Left colon (tissue), 2 donors: ENCODE measurements at regions of chr15 and their contacts with region 1.

Region 1: DNA sequence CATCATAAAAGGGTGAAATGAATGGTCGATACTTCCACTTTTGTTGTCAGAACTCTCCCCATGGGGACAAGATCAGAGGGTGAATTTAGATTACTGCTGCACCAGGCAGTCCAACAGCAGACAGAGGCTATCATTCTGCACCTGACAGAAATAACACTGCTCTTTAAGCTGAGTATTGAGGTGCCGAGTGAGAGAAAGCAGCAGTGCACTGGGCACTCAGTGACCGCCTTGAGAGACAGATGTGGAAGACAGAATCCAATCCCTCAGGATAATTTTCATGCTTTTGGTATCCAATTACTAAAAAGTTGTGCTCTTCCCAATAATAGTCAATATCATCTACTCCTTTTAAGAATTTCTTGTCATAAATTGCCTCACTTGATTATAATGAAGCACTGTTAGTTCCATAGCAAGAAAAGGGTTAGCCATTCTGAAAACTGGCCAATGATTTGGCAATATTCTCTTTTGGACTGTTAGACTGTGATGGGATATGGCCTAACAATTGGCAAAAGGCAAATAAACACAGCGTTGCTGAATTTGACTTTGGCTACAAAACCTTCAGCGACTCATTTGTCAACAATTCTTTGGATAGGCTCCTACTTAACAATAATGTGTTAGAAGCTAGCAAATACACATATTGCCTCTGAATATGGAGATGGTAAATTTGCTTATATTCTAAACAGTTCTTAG is 5.5 kb downstream of the FGF7 start:
- DNase-seq: no peak
- ATAC-seq: no peak

Region 2: GRCh38 chr15:49255966-49256759 is 172.4 kb before region 1 on chr15:
- intact Hi-C with region 1: no loop called
- DNase-seq: no peak
- ATAC-seq: no peak

Region 3: DNA sequence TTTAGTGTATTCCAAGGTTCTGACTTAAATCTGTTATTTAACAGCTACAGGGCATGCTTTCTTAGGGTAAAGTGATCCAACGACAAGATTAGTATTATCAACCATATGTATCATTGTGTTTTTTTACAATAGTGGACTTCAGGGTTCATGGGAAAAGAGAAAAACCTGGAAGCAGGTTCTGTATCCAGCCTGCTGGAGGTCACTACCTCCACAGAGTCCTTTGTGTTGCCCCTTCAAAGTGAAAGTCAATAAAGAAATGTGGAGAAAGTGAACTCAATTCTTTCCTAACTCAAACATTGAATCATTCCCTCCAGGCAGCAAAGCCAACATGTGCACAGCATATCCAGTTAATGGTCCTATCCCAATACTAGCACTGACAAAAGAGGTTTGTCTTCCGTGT is 39.9 kb after region 1 on chr15:
- intact Hi-C with region 1: no loop called
- DNase-seq: no peak
- ATAC-seq: no peak

Region 4: DNA sequence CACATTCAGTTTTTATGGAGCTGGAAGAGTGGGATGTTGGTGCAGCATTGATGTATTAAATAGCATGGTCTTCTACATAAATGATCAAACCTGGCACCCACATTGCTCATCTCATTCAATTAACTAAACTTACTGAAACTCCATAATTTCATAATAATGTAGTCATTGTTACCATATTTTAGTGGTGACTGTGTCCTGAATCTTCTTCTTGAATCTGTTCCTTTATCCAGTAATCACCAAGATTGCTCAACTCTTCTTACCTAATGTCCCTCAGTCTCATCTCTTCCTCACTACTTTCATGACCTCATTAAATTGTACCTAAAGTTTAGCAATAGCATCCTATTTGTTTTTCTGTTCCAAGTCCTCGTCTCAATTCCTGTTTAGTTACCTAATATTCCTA is 64.3 kb after region 1 on chr15:
- intact Hi-C with region 1: no loop called
- DNase-seq: no peak
- ATAC-seq: no peak

Region 5: GRCh38 chr15:50051803-50052419 is 623.4 kb after region 1 on chr15:
- intact Hi-C with region 1: loop called in 1 of 2 experiments (anchors 5 kb)
- DNase-seq: peak in 1 of 2 donors; percentile 36
- ATAC-seq: peak; percentile 69